ENCODE measurements at regions of chr16 and their contacts with region 1.

Region 1: DNA sequence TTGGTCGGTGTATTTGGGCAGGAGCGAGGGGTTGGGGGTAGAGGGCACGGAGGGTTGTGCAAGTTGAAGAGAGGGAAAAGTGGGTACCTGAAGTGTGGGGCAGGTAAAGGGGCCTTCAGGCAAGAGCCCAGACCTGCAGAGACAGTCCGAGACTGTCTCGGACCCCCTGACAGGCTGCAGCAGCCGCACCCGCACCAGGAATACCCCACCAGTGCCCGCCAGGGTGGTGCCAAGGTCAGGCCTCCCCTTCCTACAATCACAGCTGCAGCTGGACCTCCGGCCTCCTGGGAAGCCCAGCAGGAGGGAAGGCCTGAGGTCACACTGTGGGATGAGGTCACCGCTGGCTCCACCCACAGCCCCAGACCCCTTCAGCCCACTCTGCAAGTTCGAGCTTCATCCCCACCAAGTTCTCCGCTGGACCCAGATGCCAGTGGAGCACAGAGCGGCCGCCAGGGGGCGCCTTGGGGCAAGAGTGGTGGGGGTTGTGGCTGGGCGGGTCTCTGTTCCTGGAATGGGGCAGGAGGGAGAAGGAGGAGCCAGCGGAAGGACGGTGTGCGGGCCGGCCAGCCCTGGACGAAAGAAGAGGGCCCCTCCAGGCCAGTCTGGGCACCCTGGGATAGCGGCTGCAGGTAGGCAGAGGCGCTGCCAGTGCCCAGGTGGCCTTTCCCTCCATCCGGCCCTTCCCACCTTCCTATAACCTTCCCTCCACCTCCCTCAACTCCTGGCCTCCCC is at the start of gene HSD3B7:
- DNase-seq: peak; percentile 87 to 98
- H3K4me3 ChIP-seq: peak within 1 kb of the TSS; percentile 27
- CTCF ChIP-seq: peak in 1 of 3 donors; percentile 74
- POLR2A ChIP-seq: no peak
- total RNA-seq, gene HSD3B7: 12.4 to 29.8 (median 19.0) TPM

Region 2: DNA sequence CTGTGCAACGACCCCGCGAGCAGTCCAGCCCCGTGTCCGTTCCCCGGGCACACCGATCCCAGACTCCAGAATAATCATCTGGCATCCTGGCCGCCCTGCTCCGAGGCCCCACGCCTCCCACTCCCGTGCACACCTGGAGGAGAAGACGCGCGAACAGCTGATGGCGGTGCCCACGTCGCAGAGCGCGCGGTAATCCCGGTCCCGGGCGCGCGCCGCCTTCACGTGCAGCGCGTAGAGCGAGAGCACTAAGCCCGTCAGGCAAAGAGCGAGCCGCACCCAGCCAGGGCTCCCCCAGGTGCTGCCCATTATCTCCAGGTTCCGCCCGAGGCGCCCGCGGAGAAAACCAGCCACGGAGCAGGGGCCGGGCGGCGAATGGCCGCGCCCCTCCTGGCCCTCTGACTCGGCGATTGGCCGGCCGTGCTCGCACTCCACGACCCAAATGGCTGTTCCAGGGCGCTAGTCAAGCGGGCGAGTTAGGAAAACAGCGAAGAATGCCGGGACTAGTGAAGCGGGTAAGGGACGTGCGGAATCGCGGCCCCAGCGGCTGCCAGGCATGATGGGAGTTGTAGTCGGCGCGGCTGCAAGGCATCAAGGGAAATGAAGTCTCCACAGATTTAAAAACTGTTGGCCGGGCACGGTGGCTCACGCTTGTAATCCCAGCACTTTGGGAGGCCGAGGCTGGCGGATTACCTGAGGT is 109.7 kb after region 1 on chr16 and contains the start of gene VKORC1:
- intact Hi-C with region 1: loop called (anchors 5 kb)
- DNase-seq: peak; percentile 95 to 98
- H3K4me3 ChIP-seq: peak within 1 kb of the TSS; percentile 82
- CTCF ChIP-seq: no peak
- POLR2A ChIP-seq: no peak
- total RNA-seq, gene VKORC1: 43.7 to 95.5 (median 73.6) TPM

Region 3: DNA sequence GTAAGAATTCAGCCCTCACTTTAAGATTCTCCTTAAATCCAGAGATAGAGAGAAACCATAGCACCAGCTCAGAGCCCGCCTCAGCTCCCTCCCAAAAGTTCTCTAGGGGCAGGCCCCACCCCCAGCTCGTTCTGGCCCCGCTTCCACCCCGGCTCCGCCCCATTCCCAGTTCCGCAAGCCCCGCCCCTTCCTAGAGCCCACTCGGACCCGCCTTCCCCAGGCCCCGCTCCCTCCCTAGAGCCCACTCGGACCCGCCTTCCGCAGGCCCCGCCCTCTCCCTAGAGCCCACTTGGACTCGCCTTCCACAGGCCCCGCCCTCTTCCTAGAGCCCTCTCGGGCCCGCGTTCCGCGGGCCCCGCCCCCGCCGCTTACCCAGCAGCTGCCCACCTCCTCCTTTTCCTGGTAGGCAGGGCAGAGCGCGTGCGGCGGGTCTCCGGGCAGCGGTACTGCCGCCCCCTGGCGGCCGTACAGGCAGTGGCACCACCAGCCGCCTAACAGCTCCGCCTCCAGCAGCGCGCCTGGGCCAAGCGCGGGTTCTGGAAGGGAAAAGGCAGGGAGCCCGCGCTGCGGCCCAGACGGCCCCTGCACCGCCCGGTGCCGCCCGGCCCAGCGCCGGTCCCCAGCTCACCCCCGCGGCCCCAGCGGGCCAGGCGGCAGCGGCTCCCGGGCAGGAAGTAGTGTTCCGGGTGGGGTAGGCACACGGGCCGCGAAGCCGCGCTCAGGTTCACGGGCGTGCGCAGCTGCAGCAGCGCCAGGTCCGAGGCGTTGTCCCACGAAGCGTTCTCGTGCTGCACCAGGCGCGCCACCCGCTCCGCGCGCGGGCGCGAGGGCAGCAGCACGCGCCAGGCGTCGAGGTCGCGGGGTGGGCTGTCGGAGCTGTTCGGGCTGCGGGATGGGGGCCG is 157.5 kb after region 1 on chr16:
- intact Hi-C with region 1: loop called (anchors 10 kb)
- DNase-seq: peak; percentile 98 to 100
- H3K4me3 ChIP-seq: peak overlapping the region; percentile 4
- CTCF ChIP-seq: peak in 1 of 3 donors; percentile 94
- POLR2A ChIP-seq: no peak

Region 4: GRCh38 chr16:31440516-31441184 is 455.8 kb after region 1 on chr16:
- intact Hi-C with region 1: loop called (anchors 10 kb)
- DNase-seq: no peak
- H3K4me3 ChIP-seq: no peak overlapping the region
- CTCF ChIP-seq: no peak
- POLR2A ChIP-seq: no peak

Region 5: GRCh38 chr16:31873556-31874365 is 888.9 kb after region 1 on chr16 and contains the start of gene ZNF267:
- intact Hi-C with region 1: loop called (anchors 5 kb)
- DNase-seq: peak; percentile 96 to 98
- H3K4me3 ChIP-seq: peak within 1 kb of the TSS; percentile 99
- CTCF ChIP-seq: no peak
- POLR2A ChIP-seq: peak in 1 of 2 donors; percentile 49
- total RNA-seq, gene ZNF267: 7.8 to 12.2 (median 10.7) TPM